Activated naive CD8-positive, alpha-beta T cell treated with anti-CD3 and anti-CD28 coated beads, Interleukin-2, amount 10 ng/mL, durations not matched to agents 7 days and 5 days (primary cell): ENCODE measurements at regions of chr2 and their contacts with region 1.

Region 1: GRCh38 chr2:37231241-37232130 is at the starts of genes CEBPZ and NDUFAF7:
- DNase-seq: peak; percentile 85
- ATAC-seq: peak; percentile 94
- H3K4me3 Mint-ChIP-seq: no peak within 1 kb of the TSS
- H3K27ac Mint-ChIP-seq: no peak within 1 kb of the TSS
- H3K4me1 Mint-ChIP-seq: peaks cover 20% of the 10 kb centered on the region
- H3K27me3 Mint-ChIP-seq: no peaks in the 10 kb centered on the region
- total RNA-seq, gene CEBPZ: 63.7 to 66.5 TPM
- total RNA-seq, gene NDUFAF7: 24.4 to 24.7 TPM

Region 2: DNA sequence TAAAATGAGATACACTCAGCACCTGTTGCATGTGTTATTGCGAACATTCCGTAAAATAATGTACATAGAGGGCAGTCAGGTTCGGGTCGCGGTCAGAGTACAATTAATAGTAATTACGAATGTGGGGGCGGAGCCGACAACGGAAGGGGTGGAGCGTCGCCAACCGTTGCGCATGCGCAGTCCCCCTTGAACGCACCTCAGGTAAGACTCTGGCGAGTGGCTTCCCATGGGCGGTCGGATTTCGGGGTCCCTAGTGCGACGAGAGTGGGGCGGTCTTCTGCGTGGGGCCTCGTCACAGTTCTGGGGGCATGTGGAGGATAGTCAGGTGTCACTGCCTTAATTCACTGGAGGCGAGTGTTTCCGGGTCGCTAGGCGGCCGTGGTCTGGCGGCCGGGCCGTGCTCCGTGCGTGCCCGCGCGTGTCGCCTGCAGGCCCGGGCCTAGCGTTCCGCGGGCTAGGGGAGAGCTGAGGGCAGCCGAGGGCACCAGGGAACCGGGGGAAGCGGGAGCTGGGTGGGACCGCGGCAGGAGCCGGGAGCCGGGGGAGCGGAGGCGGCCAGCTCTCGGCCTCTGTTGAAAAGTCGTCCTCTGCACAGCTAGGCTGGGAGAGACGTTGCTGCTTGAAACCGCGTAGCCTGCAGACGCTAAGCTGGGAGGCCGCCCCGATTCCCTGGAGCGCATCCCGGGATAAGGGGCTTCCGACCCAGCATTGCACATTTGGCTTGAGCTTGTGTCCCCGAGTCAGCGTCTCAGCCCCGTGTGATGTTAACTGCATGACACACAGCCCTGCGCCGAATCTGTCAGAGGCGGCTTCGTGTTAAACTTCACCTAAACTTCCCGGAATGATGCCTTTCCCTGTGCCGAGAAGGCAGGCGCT is 34.9 kb before region 1 on chr2 and contains the start of gene CEBPZOS:
- POLR2A ChIA-PET with region 1: interaction called, 10 read pairs
- DNase-seq: peak; percentile 92
- ATAC-seq: peak; percentile 86
- H3K4me3 Mint-ChIP-seq: peak within 1 kb of the TSS; percentile 100
- H3K27ac Mint-ChIP-seq: peak within 1 kb of the TSS; percentile 99
- H3K4me1 Mint-ChIP-seq: peaks cover 21% of the 10 kb centered on the region
- H3K27me3 Mint-ChIP-seq: no peaks in the 10 kb centered on the region
- total RNA-seq, gene CEBPZOS: 38.1 to 41.8 TPM

Region 3: GRCh38 chr2:37211212-37211611 is 20.3 kb before region 1 on chr2:
- POLR2A ChIA-PET with region 1: no interaction called
- DNase-seq: no peak
- ATAC-seq: no peak
- H3K4me3 Mint-ChIP-seq: no peak overlapping the region
- H3K27ac Mint-ChIP-seq: no peak overlapping the region
- H3K4me1 Mint-ChIP-seq: peaks cover 12% of the 10 kb centered on the region
- H3K27me3 Mint-ChIP-seq: no peaks in the 10 kb centered on the region

Region 4: DNA sequence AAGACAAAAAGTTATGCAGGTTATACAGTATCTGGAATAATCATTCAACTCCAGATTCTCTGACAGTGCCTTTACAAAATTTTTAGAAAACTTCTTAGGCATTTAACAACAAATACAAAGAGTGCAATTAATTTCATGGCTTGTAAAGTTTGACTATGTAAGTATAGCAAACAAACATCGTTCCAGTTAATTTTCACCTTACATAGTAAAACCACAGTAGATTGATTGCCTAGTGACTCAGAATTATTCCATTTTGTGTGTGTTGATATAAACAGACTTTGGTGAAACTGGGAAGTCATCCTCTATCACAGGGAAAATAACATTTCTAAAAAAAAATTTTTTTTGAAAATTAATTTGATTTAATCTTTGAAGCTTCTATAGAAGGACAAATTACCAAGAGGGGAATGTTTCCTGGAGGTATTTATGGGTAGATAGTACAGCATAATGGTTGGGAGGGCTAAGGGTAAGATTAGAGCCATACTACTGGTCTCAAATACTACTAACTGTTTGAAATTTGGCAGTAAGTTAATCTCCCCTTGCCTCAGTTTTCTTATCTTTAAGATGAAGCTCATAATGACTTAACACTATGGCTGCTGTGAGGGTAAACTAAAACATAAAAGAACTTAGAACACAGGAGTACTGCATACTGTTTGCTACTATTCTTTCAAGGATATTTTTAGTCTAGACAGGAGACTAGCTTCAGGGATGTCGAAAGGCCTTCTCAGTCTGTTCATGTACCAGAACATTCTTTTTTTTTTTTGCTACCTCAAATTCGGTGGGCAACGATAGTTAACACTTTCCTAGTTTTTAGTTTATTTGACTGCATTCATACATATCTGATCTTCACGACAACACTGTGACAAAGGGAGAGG is 19.6 kb after region 1 on chr2:
- POLR2A ChIA-PET with region 1: no interaction called
- DNase-seq: no peak
- ATAC-seq: no peak
- H3K4me3 Mint-ChIP-seq: no peak overlapping the region
- H3K27ac Mint-ChIP-seq: no peak overlapping the region
- H3K4me1 Mint-ChIP-seq: no peaks in the 10 kb centered on the region
- H3K27me3 Mint-ChIP-seq: no peaks in the 10 kb centered on the region